HEK293 (cell line): ENCODE measurements at regions of chr6 and their contacts with region 1.

Region 1: DNA sequence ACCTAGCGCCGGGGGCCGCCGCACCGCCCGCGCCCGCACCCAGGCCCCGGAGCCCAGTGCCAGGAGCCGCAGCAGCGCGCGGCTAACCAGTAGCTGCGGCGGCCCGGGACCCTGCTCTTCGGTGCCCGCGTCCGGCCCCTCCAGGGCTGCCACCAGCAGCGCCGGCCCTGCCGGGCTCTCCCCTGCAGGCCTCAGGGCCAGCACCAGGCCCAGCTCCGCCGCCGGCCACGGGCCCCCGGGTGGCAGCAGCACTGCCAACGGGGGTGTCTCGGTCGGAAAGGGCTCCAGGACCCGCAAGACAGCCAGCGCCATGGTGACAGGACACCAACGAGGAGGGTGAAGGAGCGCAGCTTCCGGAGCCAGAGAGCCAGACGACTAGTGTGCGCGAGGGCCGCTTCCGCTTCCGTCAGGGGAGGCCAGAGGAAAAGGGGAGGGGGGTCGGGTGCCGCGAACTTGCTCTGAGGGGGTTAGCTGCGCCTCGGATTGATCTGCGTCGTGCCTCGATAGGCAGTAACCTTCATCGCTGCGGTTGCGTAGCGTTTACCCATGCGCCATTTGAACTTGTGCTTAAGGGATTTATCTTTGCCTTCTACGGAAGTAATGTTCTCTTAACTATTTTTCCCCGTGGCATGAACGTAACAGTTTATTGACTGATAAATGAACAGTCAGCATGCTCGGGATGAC is at the start of gene PEX6:
- H3K4me3 ChIP-seq: peak within 1 kb of the TSS; percentile 88
- H3K27ac ChIP-seq: peak within 1 kb of the TSS; percentile 84
- H3K4me1 ChIP-seq: no peaks in the 10 kb centered on the region
- CTCF ChIP-seq: no peak

Region 2: DNA sequence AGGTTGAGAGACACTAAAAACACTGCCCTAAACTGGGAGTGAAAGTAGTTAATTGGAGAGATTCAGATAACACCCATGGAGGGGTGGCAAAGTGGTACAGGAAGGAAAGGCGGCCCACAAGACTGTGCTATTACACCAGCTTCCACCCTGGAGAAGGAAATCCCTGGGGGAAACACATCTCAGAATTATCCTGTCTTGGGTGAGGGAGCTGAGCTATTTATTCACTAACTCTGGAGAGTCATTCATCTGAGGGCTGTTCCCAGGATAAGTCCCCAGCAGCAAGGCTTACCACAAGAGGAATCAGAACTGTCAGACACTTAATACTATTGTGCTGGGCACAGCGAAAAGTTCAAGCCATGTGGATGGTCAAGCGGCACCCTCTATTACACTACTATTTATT is 243.0 kb before region 1 on chr6:
- CTCF ChIA-PET with region 1: no interaction called
- POLR2A ChIA-PET with region 1: no interaction called
- H3K4me3 ChIP-seq: no peak overlapping the region
- H3K27ac ChIP-seq: no peak overlapping the region
- H3K4me1 ChIP-seq: no peaks in the 10 kb centered on the region
- CTCF ChIP-seq: no peak

Region 3: GRCh38 chr6:42963855-42964605 is 15.0 kb before region 1 on chr6:
- CTCF ChIA-PET with region 1: interaction called, 20 read pairs
- POLR2A ChIA-PET with region 1: interaction called, 20 read pairs
- H3K4me3 ChIP-seq: no peak overlapping the region
- H3K27ac ChIP-seq: no peak overlapping the region; the same call in 1 of the 2 replicates
- H3K4me1 ChIP-seq: 0 out of 2 replicates have a peak, but pooled peaks cover 4% of the 10 kb centered on the region
- CTCF ChIP-seq: 0 out of 2 replicates have a peak, but pooled peaks have one; percentile 15

Region 4: GRCh38 chr6:42996513-42996912 is 17.5 kb after region 1 on chr6:
- CTCF ChIA-PET with region 1: interaction called, 5 read pairs
- POLR2A ChIA-PET with region 1: interaction called, 31 read pairs
- H3K4me3 ChIP-seq: no peak overlapping the region
- H3K27ac ChIP-seq: no peak overlapping the region
- H3K4me1 ChIP-seq: no peaks in the 10 kb centered on the region
- CTCF ChIP-seq: no peak

Region 5: GRCh38 chr6:43021270-43022047 is 42.5 kb after region 1 on chr6 and contains the start of gene RRP36:
- CTCF ChIA-PET with region 1: interaction called, 3 read pairs
- POLR2A ChIA-PET with region 1: interaction called, 14 read pairs
- H3K4me3 ChIP-seq: peak within 1 kb of the TSS; percentile 91
- H3K27ac ChIP-seq: peak within 1 kb of the TSS; percentile 86
- H3K4me1 ChIP-seq: peaks cover 9% of the 10 kb centered on the region
- CTCF ChIP-seq: no peak